ENCODE measurements at regions of chr2 and their contacts with region 1.

Region 1: DNA sequence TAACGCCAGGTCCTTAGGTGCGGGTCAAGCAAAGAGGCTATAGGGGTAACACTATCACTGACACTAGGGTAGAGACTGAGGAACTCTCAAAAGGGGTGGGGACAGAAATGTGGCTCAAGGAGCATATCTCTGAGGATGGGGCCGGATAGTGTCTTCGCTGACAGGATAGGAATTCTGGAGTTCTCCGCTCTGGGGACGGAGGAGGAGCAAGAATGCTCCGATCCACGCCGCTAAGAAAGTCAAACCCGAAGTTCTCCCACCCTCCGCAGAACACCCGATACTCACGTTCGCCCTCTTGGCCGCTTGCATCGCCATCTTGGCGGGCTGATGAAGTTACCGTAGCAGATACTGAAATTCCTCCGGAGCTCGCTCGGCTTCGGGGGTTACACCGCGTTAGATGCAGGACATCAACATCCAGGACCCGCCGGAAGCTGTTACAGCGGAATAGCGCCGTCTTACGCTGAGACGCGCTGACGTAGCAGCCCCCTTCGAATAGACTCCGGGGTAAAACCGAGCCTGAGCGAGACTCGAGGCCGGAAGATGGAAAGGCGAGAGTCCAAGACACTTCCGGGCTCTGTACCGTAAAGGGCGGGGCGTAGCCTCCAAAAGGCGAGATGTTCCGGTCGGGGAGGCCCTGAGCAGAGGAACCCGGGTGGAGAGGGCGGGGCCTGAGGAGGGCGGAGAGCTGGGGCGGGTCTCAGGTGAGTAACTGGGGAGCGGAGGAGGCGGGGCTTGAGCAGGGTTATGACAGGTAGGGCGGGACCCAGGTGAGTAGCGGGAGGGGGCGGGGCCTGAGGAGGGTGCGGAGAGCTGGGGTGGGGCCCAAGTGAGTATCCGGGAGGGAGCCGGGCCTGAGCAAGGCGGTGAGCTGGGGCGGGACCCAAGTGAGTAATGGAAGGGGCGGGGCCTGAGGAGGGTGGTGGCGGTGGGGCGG is at the start of gene SF3B6:
- DNase-seq: peak; percentile 98 to 100 (median 99)
- H3K4me3 ChIP-seq: peak within 1 kb of the TSS; percentile 28 to 90 (median 58)
- H3K27ac ChIP-seq: peak within 1 kb of the TSS; percentile 68 to 96 (median 84)
- H3K4me1 ChIP-seq: peaks cover 14 to 20% of the 10 kb centered on the region in 2 donors
- H3K27me3 ChIP-seq: no peaks in the 10 kb centered on the region
- CTCF ChIP-seq: no peak
- POLR2A ChIP-seq: peak; percentile 12 to 76
- total RNA-seq, gene SF3B6: 61.2 to 209 (median 81.2) TPM

Region 2: GRCh38 chr2:23926750-23927571 is 149.2 kb before region 1 on chr2 and contains the start of gene ATAD2B:
- intact Hi-C with region 1: loop called (anchors 5 to 10 kb)
- DNase-seq: peak; percentile 87 to 96 (median 91)
- H3K4me3 ChIP-seq: peak within 1 kb of the TSS; percentile 17 to 97 (median 93)
- H3K27ac ChIP-seq: peak within 1 kb of the TSS; percentile 96 to 100 (median 99)
- H3K4me1 ChIP-seq: peaks cover 17 to 27% of the 10 kb centered on the region in 2 donors
- H3K27me3 ChIP-seq: no peaks in the 10 kb centered on the region
- CTCF ChIP-seq: peak; percentile 51 to 97 (median 78)
- POLR2A ChIP-seq: peak; percentile 67 to 93
- total RNA-seq, gene ATAD2B: 3.4 to 26.7 (median 18.0) TPM